Naive thymus-derived CD4-positive, alpha-beta T cell (primary cell): ENCODE measurements at regions of chr6 and their contacts with region 1.

Region 1: DNA sequence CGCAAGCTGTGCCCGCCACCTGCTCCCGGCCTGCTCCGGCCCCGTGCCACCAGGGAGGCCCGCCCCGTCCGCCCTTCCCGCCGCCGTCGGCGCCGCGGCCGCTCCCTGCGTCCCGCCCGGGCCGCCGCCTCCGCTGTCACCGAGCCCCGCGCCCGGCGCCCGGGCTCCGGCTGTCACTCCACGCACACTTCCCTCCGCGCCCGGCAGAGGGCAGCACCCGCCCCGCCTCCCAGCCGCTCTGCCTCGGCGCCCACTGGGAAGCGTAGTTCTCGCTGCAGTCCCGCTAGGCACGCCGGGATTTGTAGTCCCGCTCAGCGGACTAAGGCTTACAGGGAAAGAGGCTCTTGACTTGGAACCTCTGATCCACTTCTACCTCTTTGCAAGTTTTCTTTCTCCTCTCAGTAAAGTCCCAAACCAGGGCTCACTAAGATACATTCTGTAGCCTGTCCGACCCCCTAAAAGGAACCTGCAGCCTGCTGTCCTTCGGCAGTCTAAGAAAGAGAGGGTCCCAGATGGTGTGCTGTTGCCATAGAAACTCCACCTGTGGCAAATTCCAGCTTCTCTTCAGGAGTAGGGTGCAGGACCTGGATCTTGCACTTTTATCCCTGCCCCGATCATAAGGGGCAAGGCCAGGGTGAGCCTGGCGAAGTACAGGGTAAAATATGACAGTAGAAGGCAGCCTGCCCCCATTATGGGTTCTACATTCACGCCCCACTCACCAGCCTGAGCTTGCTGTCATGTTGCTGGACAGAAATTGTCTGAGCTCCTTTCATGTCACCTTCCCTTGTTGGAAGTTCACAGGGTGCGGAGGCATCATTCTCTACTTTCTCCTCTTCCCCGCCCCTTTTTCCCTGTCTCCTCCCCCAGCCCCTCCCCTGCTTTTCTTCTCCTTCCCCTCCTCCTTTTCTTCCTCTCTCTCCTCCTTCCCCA is at the start of gene TFEB:
- DNase-seq: peak; percentile 88 to 98 (median 93)
- ATAC-seq: peak; percentile 87
- H3K4me3 ChIP-seq: peak within 1 kb of the TSS; percentile 57
- H3K4me3 Mint-ChIP-seq: peak within 1 kb of the TSS; percentile 66 to 89 (median 80)
- H3K27ac ChIP-seq: peak within 1 kb of the TSS; percentile 80
- H3K27ac Mint-ChIP-seq: peak within 1 kb of the TSS in 8 of 9 donors; percentile 34 to 84 (median 62)
- H3K4me1 ChIP-seq: peaks cover 32 to 37% of the 10 kb centered on the region in 2 donors
- H3K4me1 Mint-ChIP-seq: peaks cover 13 to 32% (median 24%) of the 10 kb centered on the region in 7 donors
- H3K27me3 ChIP-seq: no peaks in the 10 kb centered on the region
- H3K27me3 Mint-ChIP-seq: no peaks in the 10 kb centered on the region
- total RNA-seq, gene TFEB: 7.4 to 39.9 (median 11.8) TPM

Region 2: GRCh38 chr6:41063884-41064285 is 671.8 kb before region 1 on chr6:
- CTCF ChIA-PET with region 1: no interaction called
- POLR2A ChIA-PET with region 1: no interaction called
- intact Hi-C with region 1: no loop called
- DNase-seq: no peak
- ATAC-seq: no peak
- H3K4me3 ChIP-seq: no peak overlapping the region
- H3K4me3 Mint-ChIP-seq: no peak overlapping the region
- H3K27ac ChIP-seq: no peak overlapping the region
- H3K27ac Mint-ChIP-seq: no peak overlapping the region
- H3K4me1 ChIP-seq: no peaks in the 10 kb centered on the region
- H3K4me1 Mint-ChIP-seq: peaks cover 7 to 22% (median 18%) of the 10 kb centered on the region in 7 donors
- H3K27me3 ChIP-seq: no peaks in the 10 kb centered on the region
- H3K27me3 Mint-ChIP-seq: no peaks in the 10 kb centered on the region

Region 3: DNA sequence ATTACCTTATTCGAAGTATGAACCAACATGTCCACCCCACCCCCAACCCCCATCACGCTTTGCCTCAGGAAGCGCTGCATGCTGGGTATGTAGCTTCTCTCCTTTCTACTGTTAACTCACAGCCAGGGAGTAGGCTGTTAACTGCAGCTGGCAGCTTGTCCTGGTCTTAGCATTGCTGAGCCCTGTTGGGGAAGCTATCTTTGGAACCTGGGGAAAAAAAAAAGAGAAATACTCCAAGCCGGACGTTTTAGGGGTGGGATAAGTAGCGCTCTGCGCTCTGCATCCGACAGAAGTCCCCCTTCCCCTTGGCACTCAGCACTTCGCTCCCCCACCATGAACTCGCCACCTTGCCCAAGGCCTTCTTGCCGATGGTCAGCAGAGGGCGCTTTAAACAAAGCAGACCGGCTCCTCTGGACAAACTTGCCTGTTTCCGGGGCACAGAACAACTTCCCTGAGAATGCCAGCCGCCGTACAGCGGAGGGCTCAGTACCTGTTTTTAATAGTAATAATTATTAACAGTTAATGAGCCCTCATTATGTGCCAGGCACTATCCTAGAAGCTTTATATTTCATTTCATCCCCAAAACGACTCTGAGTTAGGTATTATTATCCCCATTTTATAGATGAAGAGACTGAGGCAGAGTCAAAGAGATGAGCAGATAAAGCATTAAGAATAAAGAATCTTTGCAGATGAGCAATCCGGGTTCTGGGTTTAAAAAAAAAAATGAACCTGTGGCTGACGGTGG is 132.7 kb before region 1 on chr6:
- CTCF ChIA-PET with region 1: interaction called, 3 read pairs
- POLR2A ChIA-PET with region 1: no interaction called
- intact Hi-C with region 1: loop called in 1 of 2 experiments (anchors 1 kb)
- DNase-seq: peak; percentile 49 to 78 (median 68)
- ATAC-seq: peak; percentile 86
- H3K4me3 ChIP-seq: no peak overlapping the region
- H3K4me3 Mint-ChIP-seq: peak overlapping the region in 6 of 10 donors; percentile 24 to 56 (median 34)
- H3K27ac ChIP-seq: no peak overlapping the region
- H3K27ac Mint-ChIP-seq: no peak overlapping the region
- H3K4me1 ChIP-seq: peaks cover 4 to 7% of the 10 kb centered on the region in 2 donors
- H3K4me1 Mint-ChIP-seq: peaks cover 4 to 7% (median 5%) of the 10 kb centered on the region in 7 donors
- H3K27me3 ChIP-seq: no peaks in the 10 kb centered on the region
- H3K27me3 Mint-ChIP-seq: peaks cover 0 to 7% (median 0%) of the 10 kb centered on the region in 5 donors

Region 4: GRCh38 chr6:41705996-41706835 is 29.5 kb before region 1 on chr6:
- CTCF ChIA-PET with region 1: interaction called, 3 read pairs
- POLR2A ChIA-PET with region 1: no interaction called
- intact Hi-C with region 1: loop called (anchors 1 kb)
- DNase-seq: peak in 2 of 9 donors; percentile 49 to 63
- ATAC-seq: peak; percentile 88
- H3K4me3 ChIP-seq: no peak overlapping the region
- H3K4me3 Mint-ChIP-seq: peak overlapping the region in 3 of 10 donors; percentile 67 to 77 (median 70)
- H3K27ac ChIP-seq: no peak overlapping the region
- H3K27ac Mint-ChIP-seq: peak overlapping the region in 2 of 9 donors; percentile 7 to 74
- H3K4me1 ChIP-seq: peaks cover 26 to 31% of the 10 kb centered on the region in 2 donors
- H3K4me1 Mint-ChIP-seq: peaks cover 30 to 59% (median 36%) of the 10 kb centered on the region in 7 donors
- H3K27me3 ChIP-seq: no peaks in the 10 kb centered on the region
- H3K27me3 Mint-ChIP-seq: no peaks in the 10 kb centered on the region

Region 5: GRCh38 chr6:41920921-41921711 is 185.4 kb after region 1 on chr6 and contains the starts of genes BYSL and MED20:
- CTCF ChIA-PET with region 1: no interaction called
- POLR2A ChIA-PET with region 1: no interaction called
- intact Hi-C with region 1: loop called (anchors 1 to 2 kb)
- DNase-seq: peak; percentile 93 to 99 (median 96)
- ATAC-seq: peak; percentile 96
- H3K4me3 ChIP-seq: peak within 1 kb of the TSS; percentile 76
- H3K4me3 Mint-ChIP-seq: peak within 1 kb of the TSS; percentile 95 to 100 (median 99)
- H3K27ac ChIP-seq: peak within 1 kb of the TSS; percentile 95
- H3K27ac Mint-ChIP-seq: peak within 1 kb of the TSS; percentile 94 to 100 (median 99)
- H3K4me1 ChIP-seq: peaks cover 20 to 24% of the 10 kb centered on the region in 2 donors
- H3K4me1 Mint-ChIP-seq: peaks cover 27 to 58% (median 50%) of the 10 kb centered on the region in 7 donors
- H3K27me3 ChIP-seq: no peaks in the 10 kb centered on the region
- H3K27me3 Mint-ChIP-seq: peaks cover 0 to 3% (median 0%) of the 10 kb centered on the region in 5 donors
- total RNA-seq, gene BYSL: 3.9 to 35.7 (median 8.1) TPM
- total RNA-seq, gene MED20: 4.5 to 21.7 (median 9.4) TPM

Region 6: GRCh38 chr6:42050266-42051032 is 314.8 kb after region 1 on chr6 and contains the start of gene TAF8:
- CTCF ChIA-PET with region 1: no interaction called
- POLR2A ChIA-PET with region 1: interaction called, 7 read pairs
- intact Hi-C with region 1: loop called (anchors 1 to 2 kb)
- DNase-seq: peak; percentile 76 to 89 (median 87)
- ATAC-seq: peak; percentile 80
- H3K4me3 ChIP-seq: peak within 1 kb of the TSS; percentile 98
- H3K4me3 Mint-ChIP-seq: peak within 1 kb of the TSS; percentile 89 to 99 (median 99)
- H3K27ac ChIP-seq: peak within 1 kb of the TSS; percentile 78
- H3K27ac Mint-ChIP-seq: peak within 1 kb of the TSS; percentile 93 to 98 (median 97)
- H3K4me1 ChIP-seq: peaks cover 24 to 27% of the 10 kb centered on the region in 2 donors
- H3K4me1 Mint-ChIP-seq: peaks cover 36 to 70% (median 51%) of the 10 kb centered on the region in 7 donors
- H3K27me3 ChIP-seq: no peaks in the 10 kb centered on the region
- H3K27me3 Mint-ChIP-seq: no peaks in the 10 kb centered on the region
- total RNA-seq, gene TAF8: 41.6 to 58.2 (median 50.8) TPM

Region 7: DNA sequence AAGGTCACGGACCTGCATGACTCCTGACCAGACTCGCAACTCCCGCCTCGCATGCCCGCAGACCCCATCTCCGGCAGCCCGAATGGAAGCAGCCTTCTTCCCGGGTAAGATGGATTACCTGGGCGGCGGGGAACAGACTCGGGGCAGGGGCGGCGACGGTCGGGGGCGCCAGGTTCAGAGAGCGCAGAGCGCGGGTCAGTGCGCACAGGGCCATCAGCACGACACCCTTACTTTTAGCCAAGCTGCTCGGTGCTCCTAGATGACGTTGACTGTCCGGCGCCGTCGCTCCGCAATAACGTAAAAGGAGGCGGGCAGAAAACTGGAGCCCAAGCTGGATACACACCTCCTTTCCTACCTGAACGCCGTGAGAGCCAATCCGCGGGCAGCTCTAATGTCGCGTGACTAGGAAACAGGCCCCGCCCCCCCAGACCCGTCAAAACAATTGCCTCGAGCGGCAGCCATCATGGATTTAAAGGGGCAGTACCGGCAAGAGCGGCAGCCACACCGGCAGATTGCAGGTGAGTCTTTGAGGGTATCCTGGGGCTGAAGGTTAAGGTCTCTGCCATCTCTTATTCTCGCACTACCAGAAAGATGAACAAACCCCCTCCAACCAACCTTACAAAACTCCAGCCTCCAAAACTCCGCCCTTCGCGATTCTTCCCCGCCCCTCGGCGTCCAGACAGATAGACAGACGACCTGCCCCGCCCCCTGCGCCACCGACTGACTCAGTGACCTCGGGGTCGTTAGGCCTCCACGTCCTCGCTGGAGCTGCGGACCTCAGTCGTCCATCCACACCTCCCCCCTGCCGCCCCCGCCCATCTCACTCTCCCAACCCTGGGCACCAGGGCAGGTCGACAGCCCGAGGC is 1323.7 kb after region 1 on chr6 and contains the starts of genes KLC4 and MRPL2:
- CTCF ChIA-PET with region 1: no interaction called
- POLR2A ChIA-PET with region 1: no interaction called
- intact Hi-C with region 1: loop called in 1 of 2 experiments (anchors 10 kb)
- DNase-seq: peak; percentile 79 to 98 (median 95)
- ATAC-seq: peak; percentile 99
- H3K4me3 ChIP-seq: peak within 1 kb of the TSS; percentile 80
- H3K4me3 Mint-ChIP-seq: peak within 1 kb of the TSS; percentile 88 to 100 (median 96)
- H3K27ac ChIP-seq: peak within 1 kb of the TSS; percentile 88
- H3K27ac Mint-ChIP-seq: peak within 1 kb of the TSS; percentile 95 to 100 (median 99)
- H3K4me1 ChIP-seq: peaks cover 0 to 21% of the 10 kb centered on the region in 2 donors
- H3K4me1 Mint-ChIP-seq: peaks cover 28 to 50% (median 45%) of the 10 kb centered on the region in 7 donors
- H3K27me3 ChIP-seq: no peaks in the 10 kb centered on the region
- H3K27me3 Mint-ChIP-seq: no peaks in the 10 kb centered on the region
- total RNA-seq, gene KLC4: 16.5 to 56.9 (median 42.5) TPM
- total RNA-seq, gene MRPL2: 32.0 to 57.5 (median 47.7) TPM